Activated CD4-positive, alpha-beta T cell treated with anti-CD3 and anti-CD28 coated beads for 36 hours (primary cell): ENCODE measurements at regions of chr14 and their contacts with region 1.

Region 1: GRCh38 chr14:56117765-56118610 is at the start of gene PELI2:
- DNase-seq: peak; percentile 85
- ATAC-seq: peak; percentile 79
- H3K4me3 Mint-ChIP-seq: peak within 1 kb of the TSS; percentile 81
- H3K27ac Mint-ChIP-seq: peak within 1 kb of the TSS; percentile 56
- H3K4me1 Mint-ChIP-seq: peaks cover 38% of the 10 kb centered on the region
- H3K27me3 Mint-ChIP-seq: peaks cover 22% of the 10 kb centered on the region
- total RNA-seq, gene PELI2: 2.2 to 3.8 TPM

Region 2: DNA sequence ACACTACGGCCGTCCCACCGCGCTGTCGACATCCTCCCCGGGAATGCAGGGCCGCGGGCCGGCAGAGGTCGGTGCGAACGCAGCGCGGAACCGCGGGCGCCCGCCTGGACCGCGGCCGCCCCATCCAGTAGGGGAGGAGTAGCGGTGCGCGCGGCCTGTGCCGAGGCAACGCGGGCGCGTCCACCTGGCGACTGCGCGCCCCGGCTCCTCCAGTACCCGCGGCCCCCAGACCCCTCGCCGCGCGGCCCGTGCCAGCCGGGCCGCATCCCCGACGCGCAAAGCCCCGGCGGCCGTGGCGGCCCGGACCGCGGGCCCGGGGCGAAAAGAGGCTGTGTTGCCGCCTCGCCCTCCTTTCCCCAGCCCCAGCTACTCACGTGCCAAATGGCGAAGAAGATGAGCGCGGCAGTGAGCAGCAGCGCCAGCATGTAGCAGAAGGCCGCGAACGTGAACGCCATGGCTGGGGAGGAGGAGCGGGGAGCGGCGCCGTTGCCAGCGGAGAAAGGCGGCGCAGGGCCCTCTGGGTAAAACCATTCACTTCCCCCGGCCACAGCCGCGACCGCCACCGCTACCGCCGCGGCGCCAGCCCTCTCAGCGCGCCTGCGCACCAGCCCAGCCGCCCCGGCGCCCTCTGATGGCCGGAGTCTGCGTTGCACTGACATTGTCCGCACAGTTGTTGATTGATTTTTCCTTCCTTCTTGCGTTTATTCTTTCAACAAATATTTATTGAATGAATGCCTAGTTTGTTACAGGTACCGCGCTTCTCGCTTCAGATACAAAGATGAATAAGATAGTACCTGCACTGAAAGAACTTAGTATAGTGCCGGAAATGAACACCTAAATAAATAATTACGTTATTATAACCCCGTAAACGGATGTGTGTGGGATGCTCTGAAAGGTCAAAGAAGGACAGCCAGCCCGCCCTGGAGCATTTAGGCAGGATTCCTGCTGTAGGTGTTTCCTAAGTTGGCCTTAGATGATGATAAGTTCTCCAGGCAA is 1676.8 kb before region 1 on chr14 and contains the start of gene CNIH1:
- CTCF ChIA-PET with region 1: no interaction called
- POLR2A ChIA-PET with region 1: no interaction called
- intact Hi-C with region 1: loop called in 1 of 2 experiments (anchors 2 kb)
- DNase-seq: peak; percentile 96
- ATAC-seq: peak; percentile 92
- H3K4me3 Mint-ChIP-seq: peak within 1 kb of the TSS; percentile 80
- H3K27ac Mint-ChIP-seq: peak within 1 kb of the TSS; percentile 99
- H3K4me1 Mint-ChIP-seq: peaks cover 47% of the 10 kb centered on the region
- H3K27me3 Mint-ChIP-seq: no peaks in the 10 kb centered on the region
- total RNA-seq, gene CNIH1: 86.6 to 109 TPM

Region 3: DNA sequence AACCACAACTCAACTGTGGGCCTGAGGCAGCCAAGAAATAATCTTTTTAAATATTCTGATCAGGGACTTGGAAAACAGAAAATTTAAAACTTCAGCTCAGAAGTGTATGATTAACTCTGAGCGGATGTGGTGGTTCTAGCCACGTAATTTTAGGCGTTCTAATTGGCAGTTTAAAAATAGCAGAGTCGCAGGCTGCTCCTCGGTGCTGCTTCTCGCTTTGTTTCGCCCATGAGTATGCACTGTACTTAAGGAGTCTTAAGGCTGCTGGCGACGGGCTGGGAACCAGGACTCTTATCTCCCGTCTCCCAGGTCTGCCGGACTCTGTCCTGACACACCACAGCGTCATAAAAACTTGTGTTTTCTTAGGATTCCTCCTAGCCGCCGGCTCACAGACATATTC is 113.2 kb before region 1 on chr14:
- CTCF ChIA-PET with region 1: no interaction called
- POLR2A ChIA-PET with region 1: no interaction called
- intact Hi-C with region 1: loop called in 1 of 2 experiments (anchors 2 kb)
- DNase-seq: peak; percentile 56
- ATAC-seq: peak; percentile 71
- H3K4me3 Mint-ChIP-seq: no peak overlapping the region
- H3K27ac Mint-ChIP-seq: no peak overlapping the region
- H3K4me1 Mint-ChIP-seq: peaks cover 34% of the 10 kb centered on the region
- H3K27me3 Mint-ChIP-seq: peaks cover 53% of the 10 kb centered on the region

Region 4: DNA sequence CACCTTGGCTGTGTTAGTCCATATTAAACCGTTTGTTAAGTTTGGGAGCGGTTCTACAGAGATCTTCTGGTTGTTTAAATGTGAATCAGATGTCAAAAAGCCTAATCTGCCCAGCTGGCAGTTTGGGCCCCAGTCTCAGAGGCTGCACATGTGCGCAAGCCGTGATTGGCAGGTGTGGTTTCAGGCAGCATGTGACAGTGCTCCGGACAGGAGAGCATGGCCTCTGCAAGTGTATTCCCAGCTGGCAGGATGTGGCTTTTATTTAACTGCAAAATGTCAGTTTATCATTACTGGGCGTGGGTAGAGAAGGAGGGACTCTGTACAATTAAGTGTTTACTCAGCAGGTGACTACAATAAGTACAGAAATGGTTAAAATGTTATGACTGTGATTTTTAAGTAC is 77.7 kb after region 1 on chr14:
- CTCF ChIA-PET with region 1: no interaction called
- POLR2A ChIA-PET with region 1: no interaction called
- intact Hi-C with region 1: loop called in 1 of 2 experiments (anchors 2 kb)
- DNase-seq: peak; percentile 61
- ATAC-seq: peak; percentile 83
- H3K4me3 Mint-ChIP-seq: peak overlapping the region; percentile 6
- H3K27ac Mint-ChIP-seq: peak overlapping the region; percentile 59
- H3K4me1 Mint-ChIP-seq: peaks cover 24% of the 10 kb centered on the region
- H3K27me3 Mint-ChIP-seq: no peaks in the 10 kb centered on the region

Region 5: GRCh38 chr14:57148056-57148455 is 1030.1 kb after region 1 on chr14:
- CTCF ChIA-PET with region 1: no interaction called
- POLR2A ChIA-PET with region 1: no interaction called
- intact Hi-C with region 1: no loop called
- DNase-seq: no peak
- ATAC-seq: no peak
- H3K4me3 Mint-ChIP-seq: no peak overlapping the region
- H3K27ac Mint-ChIP-seq: no peak overlapping the region
- H3K4me1 Mint-ChIP-seq: no peaks in the 10 kb centered on the region
- H3K27me3 Mint-ChIP-seq: peaks cover 2% of the 10 kb centered on the region

Region 6: DNA sequence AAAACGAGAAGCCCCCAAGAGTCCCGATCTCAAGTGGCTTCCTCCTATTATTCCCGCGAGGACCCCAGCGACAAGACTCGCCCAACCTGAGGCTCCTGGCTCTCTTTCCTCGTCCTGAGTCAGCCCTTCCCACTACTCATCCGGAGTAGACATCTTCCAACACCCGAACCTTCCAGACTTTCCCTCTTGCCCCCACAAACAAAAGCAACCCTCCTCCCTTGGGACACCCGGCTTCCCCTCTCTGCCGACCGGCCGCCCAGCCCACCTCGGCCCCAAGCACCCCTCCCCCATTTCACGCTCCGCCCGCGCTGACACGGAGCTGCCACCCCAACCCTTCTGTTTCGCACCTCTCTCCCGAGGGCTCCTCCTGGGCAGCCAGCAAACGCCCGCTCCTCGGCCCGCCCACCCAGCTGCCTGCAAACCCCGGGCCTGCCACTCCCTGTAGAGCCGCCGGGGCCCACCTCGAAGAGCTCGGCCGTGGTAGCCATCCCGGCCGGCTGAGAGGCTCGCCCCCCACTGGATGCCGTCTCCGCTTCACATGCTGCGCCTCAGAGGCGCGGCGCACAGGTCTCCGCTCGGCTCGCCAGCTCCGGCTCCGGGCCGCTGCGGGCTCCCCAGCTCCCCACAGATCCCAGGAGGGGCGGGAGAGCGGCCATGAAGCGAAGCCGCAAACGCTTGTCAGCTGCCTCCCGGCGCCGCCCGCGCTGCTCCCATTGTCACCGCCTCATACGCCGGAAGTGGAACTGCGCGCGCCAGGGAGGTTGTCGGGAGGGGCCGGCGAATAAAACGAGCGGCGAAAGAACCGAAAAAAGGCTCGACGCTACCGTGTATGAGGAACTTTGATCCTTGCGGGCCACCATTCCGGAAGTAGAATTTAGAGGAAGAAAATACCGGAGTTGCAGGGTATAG is 1150.4 kb after region 1 on chr14 and contains the starts of genes AP5M1 and EXOC5:
- CTCF ChIA-PET with region 1: no interaction called
- POLR2A ChIA-PET with region 1: no interaction called
- intact Hi-C with region 1: loop called in 1 of 2 experiments (anchors 5 kb)
- DNase-seq: peak; percentile 96
- ATAC-seq: peak; percentile 93
- H3K4me3 Mint-ChIP-seq: peak within 1 kb of the TSS; percentile 90
- H3K27ac Mint-ChIP-seq: peak within 1 kb of the TSS; percentile 99
- H3K4me1 Mint-ChIP-seq: peaks cover 53% of the 10 kb centered on the region
- H3K27me3 Mint-ChIP-seq: no peaks in the 10 kb centered on the region
- total RNA-seq, gene AP5M1: 30.8 to 32.7 TPM
- total RNA-seq, gene EXOC5: 66.5 to 80.2 TPM